ENCODE measurements at regions of chr3 and their contacts with region 1.

Region 1: DNA sequence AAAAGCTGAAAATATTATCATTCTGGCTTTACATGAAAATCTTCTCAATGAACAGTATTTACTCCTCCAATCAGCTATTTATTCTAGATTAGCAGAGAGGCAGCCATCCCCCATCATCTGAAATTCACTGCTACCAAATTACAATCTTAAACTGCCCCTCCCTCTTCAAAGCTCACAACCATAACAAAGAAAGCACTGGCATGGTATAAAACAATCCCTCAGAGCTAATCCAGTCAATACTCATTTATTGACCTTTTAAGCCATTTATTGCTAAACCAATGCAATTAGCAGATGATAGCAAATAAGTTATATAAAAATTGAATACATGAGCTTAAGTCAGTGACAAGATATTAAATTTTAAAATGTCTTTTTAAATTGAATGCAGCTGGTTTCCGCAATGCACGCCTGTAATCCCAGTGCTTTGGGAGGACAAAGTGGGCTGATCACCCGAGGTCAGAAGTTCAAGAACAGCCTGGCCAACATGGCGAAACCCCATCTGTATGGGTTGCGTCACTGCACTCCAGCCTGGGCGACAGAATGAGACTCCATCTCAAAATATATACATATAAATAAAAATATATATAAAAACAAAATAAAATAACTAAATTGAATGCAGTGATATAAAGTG is 12.1 kb downstream of the SLC4A7 start:
- H3K4me3 ChIP-seq: no peak overlapping the region
- H3K27ac ChIP-seq: no peak overlapping the region
- H3K4me1 ChIP-seq: no peaks in the 10 kb centered on the region
- CTCF ChIP-seq: no peak

Region 2: GRCh38 chr3:27072810-27073651 is 399.0 kb before region 1 on chr3:
- CTCF ChIA-PET with region 1: no interaction called
- POLR2A ChIA-PET with region 1: no interaction called
- H3K4me3 ChIP-seq: no peak overlapping the region
- H3K27ac ChIP-seq: no peak overlapping the region
- H3K4me1 ChIP-seq: no peaks in the 10 kb centered on the region
- CTCF ChIP-seq: no peak

Region 3: DNA sequence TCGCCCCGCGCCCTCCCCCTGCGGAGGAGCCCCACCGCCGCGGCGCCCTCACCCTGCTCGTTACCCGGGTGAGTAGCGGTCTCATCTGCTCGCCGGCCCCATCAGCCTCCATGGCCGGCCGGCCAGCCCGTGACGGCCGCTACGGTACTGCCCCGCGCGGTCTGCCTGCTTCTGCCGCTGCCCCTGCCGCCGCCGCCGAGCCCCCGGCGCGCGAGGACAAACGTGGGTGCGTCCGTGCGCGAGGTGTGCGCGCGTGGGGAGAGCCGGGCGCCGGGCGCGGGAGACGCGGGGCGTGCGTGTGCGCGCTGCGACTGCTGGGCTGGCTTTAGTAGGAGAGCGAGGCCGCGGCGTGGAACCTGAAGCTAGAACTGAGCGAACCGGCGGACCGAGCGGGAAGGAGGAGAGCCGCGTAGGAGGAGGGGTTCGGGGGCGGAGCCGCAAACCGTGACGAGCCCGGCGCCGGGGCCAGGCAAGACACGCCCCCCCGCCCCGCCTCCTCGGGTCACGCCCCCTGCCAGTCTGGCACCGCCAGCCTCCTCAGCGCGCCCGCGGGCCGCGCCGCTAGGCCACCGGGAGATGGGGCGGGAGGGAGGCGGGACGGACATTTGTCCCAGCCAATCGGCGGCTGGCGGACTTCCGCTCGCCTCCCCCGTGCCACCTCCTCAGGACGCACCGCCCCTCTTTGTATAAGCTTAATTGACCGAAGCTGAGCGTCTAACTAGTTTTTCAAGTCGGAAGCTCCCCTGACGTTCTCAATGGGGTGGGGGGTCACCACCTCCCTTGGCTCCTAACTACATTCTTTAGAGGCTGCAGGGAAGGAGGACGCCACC is 12.2 kb after region 1 on chr3 and contains the start of gene SLC4A7:
- CTCF ChIA-PET with region 1: interaction called, 4 read pairs
- POLR2A ChIA-PET with region 1: interaction called, 14 read pairs
- H3K4me3 ChIP-seq: peak within 1 kb of the TSS; percentile 64
- H3K27ac ChIP-seq: peak within 1 kb of the TSS; percentile 79
- H3K4me1 ChIP-seq: no peaks in the 10 kb centered on the region
- CTCF ChIP-seq: no peak

Measured in HEK293 (cell line).